ENCODE measurements at regions of chr18 and their contacts with region 1.

Region 1: DNA sequence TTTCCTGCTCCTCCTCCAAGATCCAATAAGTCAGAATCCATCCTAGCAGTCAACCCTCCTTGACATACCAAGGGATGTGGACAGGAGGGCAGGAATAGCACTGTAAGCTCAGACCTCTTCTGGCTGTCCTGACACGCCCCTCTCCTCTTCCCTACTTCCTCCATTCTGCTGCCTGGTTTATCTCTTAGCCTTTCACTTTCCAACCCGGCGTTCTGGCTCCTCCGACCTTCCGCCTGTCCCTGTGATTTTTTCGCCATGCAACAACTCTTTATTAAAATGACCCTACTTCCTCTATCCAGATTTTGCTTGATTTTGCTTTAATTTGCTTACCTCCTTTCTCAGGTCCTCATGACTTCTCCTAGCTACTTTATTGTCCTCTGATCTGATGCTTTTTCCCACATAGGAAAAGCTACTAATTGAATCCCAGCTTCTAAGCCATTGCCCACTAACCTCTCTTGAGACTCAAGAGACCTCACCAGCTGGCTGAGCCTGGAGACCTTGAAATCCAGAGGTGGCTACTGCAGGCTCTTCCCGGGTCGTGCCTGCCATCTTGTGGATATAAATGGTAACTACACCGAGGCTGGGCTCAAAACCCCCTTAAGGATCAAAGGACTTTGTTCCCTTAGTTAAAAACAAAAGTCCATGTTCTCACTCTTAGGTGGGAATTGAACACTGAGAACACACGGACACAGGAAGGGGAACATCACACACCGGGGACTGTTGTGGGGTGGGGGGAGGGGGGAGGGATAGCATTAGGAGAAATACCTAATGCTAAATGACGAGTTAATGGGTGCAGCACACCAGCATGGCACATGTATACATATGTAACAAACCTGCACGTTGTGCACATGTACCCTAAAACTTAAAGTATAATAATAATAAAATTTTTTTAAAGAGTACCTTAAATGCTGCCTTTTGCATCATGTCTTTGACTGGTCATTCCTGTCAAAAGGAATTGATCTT is 139.4 kb downstream of the AKAIN1 start:
- DNase-seq: peak; percentile 32
- ATAC-seq: peak; percentile 79
- H3K4me3 ChIP-seq: no peak overlapping the region
- H3K27ac ChIP-seq: no peak overlapping the region
- H3K4me1 ChIP-seq: no peaks in the 10 kb centered on the region; the same call in 1 of the 2 replicates
- H3K27me3 ChIP-seq: no peaks in the 10 kb centered on the region
- CTCF ChIP-seq: peak; percentile 72 to 93 (median 74); a peak in 4 of 6 replicates
- EP300 ChIP-seq: no peak
- POLR2A ChIP-seq: no peak
- RAD21 ChIP-seq: peak; percentile 92

Region 2: DNA sequence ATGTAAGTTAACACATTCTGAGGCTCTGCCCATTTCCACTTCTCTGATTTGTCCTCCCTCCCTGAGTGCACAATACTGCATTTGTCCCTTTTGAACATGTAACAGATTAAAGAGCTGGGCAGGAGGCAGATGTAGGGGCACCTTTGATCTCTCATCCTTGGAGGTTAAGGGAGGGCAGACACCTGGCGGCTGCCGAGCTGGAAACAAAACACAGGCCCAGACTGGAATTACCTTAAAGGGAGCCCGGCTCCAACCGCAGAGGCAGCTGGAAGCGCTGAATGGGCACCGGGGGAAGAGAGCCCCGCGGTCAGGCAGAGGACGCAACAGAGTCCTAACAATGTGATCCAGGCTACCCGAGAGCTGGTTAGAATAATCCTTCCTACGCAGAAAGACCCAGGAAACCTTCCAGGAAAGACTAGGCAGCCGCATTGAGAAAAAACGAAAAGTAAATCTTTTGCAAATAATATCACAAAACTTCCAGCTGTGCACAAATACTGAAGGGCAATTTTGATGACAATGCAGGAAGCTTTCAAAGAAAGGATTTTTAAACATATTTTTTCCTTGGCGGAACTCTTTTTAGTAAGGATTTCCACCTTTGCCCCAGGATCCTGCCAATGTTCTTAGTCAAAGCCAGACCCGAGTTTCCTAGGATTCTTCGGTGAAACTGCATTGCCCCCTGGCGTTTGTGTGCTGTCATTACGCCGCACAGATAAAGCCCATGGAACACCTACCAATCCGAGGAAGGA is 1391.7 kb before region 1 on chr18:
- CTCF ChIA-PET with region 1: interaction called, 11 read pairs
- POLR2A ChIA-PET with region 1: no interaction called
- RAD21 ChIA-PET with region 1: interaction called, 6 read pairs
- SMC1A ChIA-PET with region 1: no interaction called
- in situ Hi-C with region 1: no loop called
- intact Hi-C with region 1: no loop called
- DNase-seq: peak; percentile 30
- ATAC-seq: peak; percentile 81
- H3K4me3 ChIP-seq: no peak overlapping the region
- H3K27ac ChIP-seq: no peak overlapping the region
- H3K4me1 ChIP-seq: peaks cover 4% of the 10 kb centered on the region
- H3K27me3 ChIP-seq: no peaks in the 10 kb centered on the region
- CTCF ChIP-seq: peak; percentile 86 to 93 (median 92)
- EP300 ChIP-seq: no peak
- POLR2A ChIP-seq: no peak
- RAD21 ChIP-seq: peak; percentile 99

Region 3: GRCh38 chr18:4106407-4107033 is 951.1 kb before region 1 on chr18:
- CTCF ChIA-PET with region 1: interaction called, 44 read pairs
- POLR2A ChIA-PET with region 1: interaction called, 3 read pairs
- RAD21 ChIA-PET with region 1: interaction called, 25 read pairs
- SMC1A ChIA-PET with region 1: interaction called, 34 read pairs
- in situ Hi-C with region 1: loop called (anchors 10 kb)
- intact Hi-C with region 1: loop called (anchors 2 kb)
- DNase-seq: no peak
- ATAC-seq: peak; percentile 70
- H3K4me3 ChIP-seq: no peak overlapping the region
- H3K27ac ChIP-seq: no peak overlapping the region
- H3K4me1 ChIP-seq: no peaks in the 10 kb centered on the region
- H3K27me3 ChIP-seq: no peaks in the 10 kb centered on the region
- CTCF ChIP-seq: peak; percentile 53 to 79 (median 73); a peak in 5 of 6 replicates
- EP300 ChIP-seq: no peak
- POLR2A ChIP-seq: no peak
- RAD21 ChIP-seq: peak; percentile 69

Region 4: DNA sequence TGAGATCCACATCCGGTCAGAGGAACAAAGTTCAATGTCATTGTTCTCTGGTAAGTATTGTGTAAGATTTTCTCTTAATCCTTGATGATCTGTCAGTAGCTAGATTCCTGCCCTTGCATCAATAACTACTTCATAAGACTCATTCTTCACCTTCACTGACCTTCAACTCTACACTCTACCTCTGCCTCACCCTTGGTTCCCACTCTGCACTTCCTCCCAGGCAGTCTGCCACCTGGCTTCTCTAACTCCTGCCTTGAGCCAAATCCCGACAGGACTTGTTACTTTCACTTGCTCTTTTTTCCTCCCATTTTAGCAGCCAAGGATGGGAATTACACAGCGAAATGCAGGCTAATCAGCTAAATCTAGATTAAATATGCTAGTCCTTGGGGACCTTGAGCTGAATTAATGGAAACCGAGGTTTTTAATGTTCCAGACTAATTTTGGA is 793.3 kb before region 1 on chr18:
- CTCF ChIA-PET with region 1: no interaction called
- POLR2A ChIA-PET with region 1: no interaction called
- RAD21 ChIA-PET with region 1: interaction called, 3 read pairs
- SMC1A ChIA-PET with region 1: interaction called, 9 read pairs
- in situ Hi-C with region 1: loop called (anchors 10 kb)
- intact Hi-C with region 1: no loop called
- DNase-seq: no peak
- ATAC-seq: peak; percentile 4; the same call in 2 of the 3 replicates
- H3K4me3 ChIP-seq: no peak overlapping the region
- H3K27ac ChIP-seq: no peak overlapping the region; the same call in 1 of the 2 replicates
- H3K4me1 ChIP-seq: no peaks in the 10 kb centered on the region
- H3K27me3 ChIP-seq: no peaks in the 10 kb centered on the region
- CTCF ChIP-seq: no peak
- EP300 ChIP-seq: no peak
- POLR2A ChIP-seq: no peak
- RAD21 ChIP-seq: no peak

Region 5: GRCh38 chr18:4391859-4392258 is 665.8 kb before region 1 on chr18:
- CTCF ChIA-PET with region 1: interaction called, 3 read pairs
- POLR2A ChIA-PET with region 1: no interaction called
- RAD21 ChIA-PET with region 1: interaction called, 5 read pairs
- SMC1A ChIA-PET with region 1: no interaction called
- in situ Hi-C with region 1: no loop called
- intact Hi-C with region 1: loop called (anchors 5 kb)
- DNase-seq: peak; percentile 60
- ATAC-seq: peak; percentile 65
- H3K4me3 ChIP-seq: no peak overlapping the region
- H3K27ac ChIP-seq: 0 out of 2 replicates have a peak overlapping the region, but pooled peaks have one; percentile 20
- H3K4me1 ChIP-seq: no peaks in the 10 kb centered on the region
- H3K27me3 ChIP-seq: no peaks in the 10 kb centered on the region
- CTCF ChIP-seq: no peak
- EP300 ChIP-seq: peak; percentile 96 to 99
- POLR2A ChIP-seq: no peak
- RAD21 ChIP-seq: no peak

Region 6: DNA sequence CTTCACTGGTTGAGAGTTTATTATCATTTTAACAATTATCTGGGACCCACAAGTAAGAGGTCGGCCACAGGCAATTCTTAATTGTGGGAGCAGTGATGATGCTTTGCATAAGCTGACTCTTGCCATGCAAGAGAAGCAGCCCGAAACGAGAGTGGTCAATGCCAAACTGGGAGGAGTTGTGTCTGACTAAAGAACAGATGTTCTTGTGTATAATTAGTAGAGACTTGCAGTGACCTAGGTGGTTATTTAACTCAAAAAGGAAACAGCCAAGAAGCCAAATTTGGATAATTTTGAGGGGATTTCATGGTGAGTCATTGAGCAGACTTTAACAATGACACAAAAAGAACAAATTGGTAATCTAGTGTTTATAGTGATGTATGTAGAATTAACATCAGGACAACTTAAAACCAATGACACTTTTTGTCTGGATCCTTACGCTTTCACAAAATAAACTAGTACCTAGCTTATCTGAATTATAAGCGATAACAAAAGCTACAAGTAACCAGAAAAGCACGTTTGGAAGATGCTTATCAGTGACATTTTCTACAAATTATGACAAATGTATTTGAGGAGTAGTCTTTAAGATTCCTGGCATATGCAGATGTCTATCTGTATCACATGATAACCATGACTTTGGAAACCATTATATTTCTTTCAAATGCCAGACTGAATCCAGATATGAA is 417.9 kb before region 1 on chr18:
- CTCF ChIA-PET with region 1: interaction called, 14 read pairs
- POLR2A ChIA-PET with region 1: interaction called, 4 read pairs
- RAD21 ChIA-PET with region 1: interaction called, 6 read pairs
- SMC1A ChIA-PET with region 1: interaction called, 12 read pairs
- in situ Hi-C with region 1: no loop called
- intact Hi-C with region 1: loop called (anchors 2 kb)
- DNase-seq: peak; percentile 97
- ATAC-seq: peak; percentile 93
- H3K4me3 ChIP-seq: no peak overlapping the region
- H3K27ac ChIP-seq: peak overlapping the region; percentile 66
- H3K4me1 ChIP-seq: peaks cover 3% of the 10 kb centered on the region
- H3K27me3 ChIP-seq: no peaks in the 10 kb centered on the region
- CTCF ChIP-seq: no peak
- EP300 ChIP-seq: peak; percentile 96 to 97
- POLR2A ChIP-seq: no peak
- RAD21 ChIP-seq: no peak

Region 7: GRCh38 chr18:5197032-5197434 is 139.4 kb after region 1 on chr18 and contains the start of gene AKAIN1:
- CTCF ChIA-PET with region 1: no interaction called
- POLR2A ChIA-PET with region 1: no interaction called
- RAD21 ChIA-PET with region 1: no interaction called
- SMC1A ChIA-PET with region 1: no interaction called
- in situ Hi-C with region 1: no loop called
- intact Hi-C with region 1: no loop called
- DNase-seq: no peak
- ATAC-seq: peak; percentile 59
- H3K4me3 ChIP-seq: no peak within 1 kb of the TSS
- H3K27ac ChIP-seq: no peak within 1 kb of the TSS
- H3K4me1 ChIP-seq: no peaks in the 10 kb centered on the region
- H3K27me3 ChIP-seq: no peaks in the 10 kb centered on the region; a peak in 2 of 4 replicates
- CTCF ChIP-seq: no peak
- EP300 ChIP-seq: no peak
- POLR2A ChIP-seq: no peak
- RAD21 ChIP-seq: no peak
- polyA plus RNA-seq, gene AKAIN1: not detected

Measured in GM12878 (cell line).